ENCODE measurements at regions of chr5 and their contacts with region 1.

Region 1: GRCh38 chr5:141512390-141512910 is 23.6 kb downstream of the PCDHGC5 start:
- DNase-seq: peak; percentile 84
- H3K4me3 Mint-ChIP-seq: peak overlapping the region; percentile 66
- H3K27ac Mint-ChIP-seq: peak overlapping the region; percentile 59
- H3K4me1 Mint-ChIP-seq: peaks cover 30% of the 10 kb centered on the region
- H3K27me3 Mint-ChIP-seq: no peaks in the 10 kb centered on the region

Region 2: DNA sequence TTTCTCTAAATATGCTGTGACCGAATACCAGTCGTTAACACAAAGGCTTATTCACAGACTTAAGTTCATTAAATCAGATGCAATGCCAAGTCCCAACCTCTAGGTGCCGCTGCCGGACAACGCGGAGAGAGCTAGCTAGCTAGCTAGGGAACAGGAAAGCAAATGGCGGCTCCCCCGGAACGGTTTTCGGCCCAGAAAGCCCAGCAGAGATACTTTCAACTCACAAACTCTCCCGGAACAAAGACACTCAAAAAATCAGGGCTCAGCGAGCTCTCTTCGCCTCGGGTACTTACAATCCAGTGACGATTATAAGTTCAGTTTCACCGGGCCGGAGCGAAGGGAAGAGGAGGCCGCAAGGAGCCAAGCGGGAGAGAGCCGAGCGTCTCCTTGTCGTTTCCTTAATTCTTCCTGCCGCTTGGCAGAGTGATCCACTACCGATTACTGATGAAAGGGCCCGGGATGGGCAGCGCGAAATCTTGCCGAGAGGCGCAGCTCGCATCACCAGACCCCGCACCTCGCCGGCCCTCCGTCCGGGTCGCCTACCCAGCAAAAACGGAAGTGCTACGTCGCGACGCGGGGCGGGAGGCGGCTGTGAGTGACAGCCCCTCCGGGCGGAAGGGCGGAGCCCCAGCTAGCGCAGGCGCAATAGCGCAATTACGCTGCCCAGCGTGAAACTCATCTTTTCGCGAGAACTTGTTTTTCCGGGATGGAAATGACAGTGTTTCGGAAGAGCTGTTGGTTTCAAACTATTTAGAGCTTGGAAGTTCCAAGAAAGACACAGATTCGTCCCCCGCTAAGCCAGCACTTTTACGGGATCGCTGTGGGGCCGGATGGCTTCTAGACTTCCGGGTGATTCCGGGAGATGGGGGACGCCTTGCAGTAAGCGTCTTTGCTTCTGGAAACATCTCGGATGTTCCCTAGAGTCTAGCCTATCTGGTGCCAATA is 192.0 kb before region 1 on chr5 and contains the start of gene TAF7:
- CTCF ChIA-PET with region 1: interaction called, 7 read pairs
- POLR2A ChIA-PET with region 1: interaction called, 12 read pairs
- DNase-seq: peak; percentile 93
- H3K4me3 Mint-ChIP-seq: peak within 1 kb of the TSS; percentile 97
- H3K27ac Mint-ChIP-seq: peak within 1 kb of the TSS; percentile 99
- H3K4me1 Mint-ChIP-seq: peaks cover 40% of the 10 kb centered on the region
- H3K27me3 Mint-ChIP-seq: peaks cover 1% of the 10 kb centered on the region
- total RNA-seq, gene TAF7: 74.3 to 75.1 TPM

Region 3: DNA sequence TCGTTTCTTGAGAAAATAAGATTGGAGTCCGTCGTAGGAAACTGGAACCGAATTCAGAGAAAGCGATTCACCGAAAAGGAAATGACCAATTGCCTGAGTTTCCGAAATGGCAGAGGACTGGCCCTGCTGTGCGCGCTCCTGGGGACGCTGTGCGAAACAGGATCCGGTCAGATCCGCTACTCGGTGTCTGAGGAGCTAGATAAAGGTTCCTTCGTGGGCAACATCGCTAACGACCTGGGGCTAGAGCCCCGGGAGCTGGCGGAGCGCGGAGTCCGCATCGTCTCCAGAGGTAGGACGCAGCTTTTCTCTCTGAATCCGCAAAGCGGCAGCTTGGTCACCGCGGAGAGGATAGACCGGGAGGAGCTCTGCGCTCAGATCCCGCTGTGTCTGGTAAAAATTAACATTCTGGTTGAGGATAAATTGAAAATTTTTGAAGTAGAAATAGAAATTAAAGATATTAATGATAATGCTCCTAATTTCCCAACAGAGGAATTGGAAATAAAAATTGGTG is 168.4 kb before region 1 on chr5:
- CTCF ChIA-PET with region 1: no interaction called
- POLR2A ChIA-PET with region 1: no interaction called
- DNase-seq: no peak
- H3K4me3 Mint-ChIP-seq: peak overlapping the region; percentile 44
- H3K27ac Mint-ChIP-seq: no peak overlapping the region
- H3K4me1 Mint-ChIP-seq: no peaks in the 10 kb centered on the region
- H3K27me3 Mint-ChIP-seq: peaks cover 5% of the 10 kb centered on the region

Region 4: DNA sequence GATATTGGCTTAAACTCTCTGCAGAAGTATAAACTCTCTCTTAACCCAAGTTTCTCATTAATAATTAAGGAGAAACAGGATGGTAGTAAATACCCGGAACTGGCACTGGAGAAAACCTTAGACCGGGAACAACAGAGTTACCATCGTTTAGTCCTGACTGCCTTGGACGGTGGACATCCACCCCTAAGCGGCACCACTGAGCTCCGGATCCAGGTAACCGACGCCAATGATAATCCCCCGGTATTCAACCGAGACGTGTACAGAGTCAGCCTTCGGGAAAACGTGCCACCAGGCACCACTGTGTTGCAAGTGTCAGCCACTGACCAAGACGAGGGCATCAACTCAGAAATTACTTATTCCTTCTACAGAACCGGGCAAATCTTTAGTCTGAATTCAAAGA is 113.8 kb before region 1 on chr5:
- CTCF ChIA-PET with region 1: interaction called, 10 read pairs
- POLR2A ChIA-PET with region 1: no interaction called
- DNase-seq: no peak
- H3K4me3 Mint-ChIP-seq: no peak overlapping the region
- H3K27ac Mint-ChIP-seq: no peak overlapping the region
- H3K4me1 Mint-ChIP-seq: no peaks in the 10 kb centered on the region
- H3K27me3 Mint-ChIP-seq: peaks cover 46% of the 10 kb centered on the region

Region 5: GRCh38 chr5:141420855-141421496 is 91.5 kb before region 1 on chr5 and contains the start of gene PCDHGA11:
- CTCF ChIA-PET with region 1: interaction called, 12 read pairs
- POLR2A ChIA-PET with region 1: interaction called, 4 read pairs
- DNase-seq: peak; percentile 46
- H3K4me3 Mint-ChIP-seq: peak within 1 kb of the TSS; percentile 70
- H3K27ac Mint-ChIP-seq: peak within 1 kb of the TSS; percentile 5
- H3K4me1 Mint-ChIP-seq: peaks cover 12% of the 10 kb centered on the region
- H3K27me3 Mint-ChIP-seq: peaks cover 64% of the 10 kb centered on the region
- total RNA-seq, gene PCDHGA11: not detected

Region 6: DNA sequence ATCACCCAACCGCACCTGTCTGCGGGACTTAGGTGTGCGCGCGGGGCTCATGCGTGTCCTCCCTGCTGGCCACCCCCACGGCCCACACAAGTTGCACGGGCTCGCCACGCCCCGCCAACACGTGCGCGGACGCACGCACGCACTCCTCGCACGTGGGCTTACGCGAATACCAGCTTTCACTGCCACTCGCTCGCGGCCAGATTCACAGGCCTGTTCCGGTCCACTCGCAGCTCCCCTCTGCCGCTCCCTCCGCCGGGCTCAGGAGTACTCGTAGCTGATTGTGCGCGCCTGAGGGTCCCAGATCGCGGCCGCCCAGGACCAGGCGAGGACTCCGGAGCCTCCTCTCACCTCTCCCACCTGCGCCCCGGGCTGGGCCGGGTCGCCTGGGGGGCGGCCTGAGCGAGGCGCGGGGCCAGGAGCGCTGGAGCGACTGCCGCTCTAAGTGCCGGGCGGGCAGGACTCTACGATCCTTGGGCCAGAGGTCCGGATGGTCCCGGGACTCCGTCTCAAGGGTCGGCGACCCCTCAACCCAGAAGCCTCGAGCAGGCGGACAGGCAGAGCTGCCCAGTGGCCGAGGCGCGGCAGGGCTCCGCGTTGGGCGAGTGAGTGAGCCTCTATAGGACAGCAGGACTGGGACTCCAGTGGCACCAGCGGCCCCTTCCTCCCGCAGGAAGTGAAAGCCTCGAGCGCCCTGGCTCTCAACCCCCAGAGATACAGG is 20.1 kb before region 1 on chr5:
- CTCF ChIA-PET with region 1: interaction called, 11 read pairs
- POLR2A ChIA-PET with region 1: interaction called, 4 read pairs
- DNase-seq: no peak
- H3K4me3 Mint-ChIP-seq: no peak overlapping the region
- H3K27ac Mint-ChIP-seq: no peak overlapping the region
- H3K4me1 Mint-ChIP-seq: peaks cover 8% of the 10 kb centered on the region
- H3K27me3 Mint-ChIP-seq: peaks cover 78% of the 10 kb centered on the region

Region 7: DNA sequence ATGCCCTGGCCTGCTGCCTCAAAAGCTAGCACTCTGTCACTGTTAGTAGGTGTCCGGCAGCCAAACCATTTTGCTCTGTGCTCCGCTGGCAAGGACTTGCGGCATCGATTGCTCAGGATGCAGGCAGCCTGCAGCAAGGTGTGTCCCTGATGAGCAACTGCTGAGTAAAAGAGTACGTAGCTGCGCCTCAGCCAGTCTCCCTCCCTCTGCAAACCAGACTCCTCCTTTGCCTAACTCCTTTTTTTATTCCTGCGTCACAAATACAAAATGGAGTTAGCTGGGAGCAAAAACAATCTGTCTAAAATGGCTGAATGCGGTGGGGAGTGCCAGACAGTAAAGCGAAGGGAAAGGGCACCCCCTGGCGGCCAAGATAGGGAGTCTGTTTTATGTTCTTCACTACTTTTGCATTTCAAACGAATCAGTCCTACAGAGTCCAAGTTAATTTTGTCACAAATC is 45.3 kb after region 1 on chr5:
- CTCF ChIA-PET with region 1: interaction called, 15 read pairs
- POLR2A ChIA-PET with region 1: no interaction called
- DNase-seq: peak; percentile 79
- H3K4me3 Mint-ChIP-seq: no peak overlapping the region
- H3K27ac Mint-ChIP-seq: peak overlapping the region; percentile 62
- H3K4me1 Mint-ChIP-seq: peaks cover 28% of the 10 kb centered on the region
- H3K27me3 Mint-ChIP-seq: no peaks in the 10 kb centered on the region

Region 8: DNA sequence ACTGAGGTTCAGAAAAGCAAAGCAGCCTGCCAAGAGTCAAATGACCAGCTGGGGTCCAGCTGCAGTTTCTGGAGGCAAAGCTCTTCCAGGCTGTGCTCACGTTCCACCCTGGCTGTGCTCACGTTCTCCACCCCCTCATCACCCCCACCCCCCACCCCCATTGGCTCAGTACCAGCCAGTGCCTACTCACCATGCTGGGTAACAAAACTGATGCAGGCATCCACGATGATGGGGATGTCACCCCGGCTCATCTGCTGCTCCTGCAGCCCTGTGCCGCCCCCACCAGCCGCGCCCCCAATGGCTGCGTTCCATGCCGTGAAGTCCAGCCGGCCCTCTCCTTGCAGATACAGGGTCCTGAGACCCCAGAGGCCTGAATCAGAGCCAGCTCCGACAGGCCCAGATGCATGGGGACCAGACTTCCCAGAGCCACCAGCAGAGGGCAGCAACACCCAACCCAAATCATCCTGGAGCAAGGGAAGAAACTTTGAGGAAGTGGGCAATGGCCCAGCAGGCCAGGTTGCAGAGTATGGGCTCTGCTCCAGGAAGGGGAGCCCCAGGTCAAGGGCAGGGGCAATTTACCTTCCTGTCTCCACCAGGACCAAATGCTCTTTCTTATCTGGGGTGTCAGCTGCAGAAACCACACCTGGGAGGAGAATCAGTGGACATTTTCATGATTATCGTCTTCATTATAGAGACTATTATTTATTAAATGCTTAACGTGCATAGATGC is 152.4 kb after region 1 on chr5:
- CTCF ChIA-PET with region 1: no interaction called
- POLR2A ChIA-PET with region 1: no interaction called
- DNase-seq: peak; percentile 80
- H3K4me3 Mint-ChIP-seq: no peak overlapping the region
- H3K27ac Mint-ChIP-seq: no peak overlapping the region
- H3K4me1 Mint-ChIP-seq: peaks cover 5% of the 10 kb centered on the region
- H3K27me3 Mint-ChIP-seq: no peaks in the 10 kb centered on the region

Measured in activated CD4-positive, alpha-beta memory T cell treated with anti-CD3 and anti-CD28 coated beads, Interleukin-2, amount 10 ng/mL, durations not matched to agents 7 days and 5 days (primary cell).